ENCODE measurements at regions of chr3 and their contacts with region 1.

Region 1: GRCh38 chr3:15815696-15816095 is 17.9 kb upstream of the ANKRD28 start:
- DNase-seq: no peak
- H3K4me3 ChIP-seq: no peak overlapping the region
- H3K27ac ChIP-seq: peak overlapping the region; percentile 36
- H3K4me1 ChIP-seq: peaks cover 16% of the 10 kb centered on the region
- H3K27me3 ChIP-seq: no peaks in the 10 kb centered on the region
- CTCF ChIP-seq: peak; percentile 29 to 50 (median 42)
- POLR2A ChIP-seq: no peak

Region 2: GRCh38 chr3:15629860-15630597 is 185.7 kb before region 1 on chr3:
- intact Hi-C with region 1: loop called (anchors 10 kb)
- DNase-seq: no peak
- H3K4me3 ChIP-seq: peak overlapping the region; percentile 2 to 29
- H3K27ac ChIP-seq: peak overlapping the region; percentile 88
- H3K4me1 ChIP-seq: peaks cover 38% of the 10 kb centered on the region
- H3K27me3 ChIP-seq: no peaks in the 10 kb centered on the region
- CTCF ChIP-seq: peak; percentile 76 to 90 (median 80)
- POLR2A ChIP-seq: no peak

Region 3: DNA sequence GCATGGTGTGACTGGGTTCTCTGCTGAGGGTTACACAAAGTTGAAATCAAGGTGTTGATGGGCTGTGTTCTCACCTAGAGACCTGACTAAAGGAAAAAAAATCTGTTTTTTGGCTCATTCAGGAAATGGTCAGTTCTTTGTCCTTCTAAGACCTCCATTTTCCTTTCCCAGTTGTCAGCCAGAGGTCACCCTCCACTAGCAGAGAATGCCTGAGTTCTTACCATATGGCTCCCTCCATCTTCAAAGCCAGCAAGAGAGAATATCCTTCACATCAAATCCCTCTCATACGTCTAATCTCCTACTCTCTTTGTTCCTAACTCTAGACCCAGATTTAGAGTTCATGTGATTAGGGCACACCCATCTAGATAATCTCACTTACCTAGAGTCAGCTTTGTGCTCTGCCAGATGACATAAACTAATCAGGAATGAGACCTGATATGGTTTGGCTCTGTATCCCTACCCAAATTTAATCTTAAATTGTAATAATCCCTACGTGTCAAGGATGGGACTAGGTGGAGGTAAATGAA is 37.3 kb before region 1 on chr3:
- intact Hi-C with region 1: no loop called
- DNase-seq: no peak
- H3K4me3 ChIP-seq: no peak overlapping the region
- H3K27ac ChIP-seq: peak overlapping the region; percentile 22
- H3K4me1 ChIP-seq: peaks cover 19% of the 10 kb centered on the region
- H3K27me3 ChIP-seq: no peaks in the 10 kb centered on the region
- CTCF ChIP-seq: no peak
- POLR2A ChIP-seq: no peak